ENCODE measurements at regions of chr14 and their contacts with region 1.

Region 1: DNA sequence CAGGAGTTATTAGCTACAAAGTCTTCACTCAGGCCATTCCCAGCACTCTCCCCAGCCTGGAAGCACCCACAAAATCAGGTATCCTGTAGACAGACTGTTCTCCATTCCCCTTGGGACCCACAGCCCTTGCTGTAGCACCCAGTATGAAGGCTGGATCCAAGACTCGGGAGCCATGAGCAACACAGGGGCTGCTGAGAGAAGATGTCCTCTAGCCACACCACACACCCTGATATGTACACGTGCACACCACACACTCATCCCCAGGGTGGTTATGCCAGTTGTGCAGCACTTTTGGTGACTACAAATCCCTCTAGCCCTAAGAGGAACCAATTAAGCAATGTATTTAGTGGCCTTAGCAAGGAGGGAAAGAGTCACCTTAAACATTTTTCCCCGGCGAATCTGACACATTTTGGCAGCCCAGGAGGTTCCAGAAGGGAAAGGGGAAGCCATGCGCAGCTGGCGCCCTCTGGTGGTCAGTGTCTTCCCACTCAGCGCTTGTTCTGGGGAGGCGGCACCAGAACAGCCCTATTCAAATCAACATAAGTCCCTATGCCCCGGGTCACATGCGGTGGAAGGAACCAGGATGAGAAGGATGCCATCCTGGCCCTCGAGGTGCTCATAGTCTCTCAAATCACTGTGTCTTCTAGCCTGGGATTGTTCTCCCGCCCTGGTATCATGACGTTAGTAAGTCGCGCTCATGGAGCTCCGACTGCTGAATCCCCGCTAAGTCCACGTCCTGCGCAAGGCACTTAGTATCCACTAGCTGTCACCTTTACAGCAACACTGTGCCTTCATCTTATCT is 96.9 kb downstream of the GCH1 start:
- DNase-seq: peak; percentile 85
- H3K4me3 Mint-ChIP-seq: peak overlapping the region; percentile 45
- H3K27ac Mint-ChIP-seq: no peak overlapping the region
- H3K4me1 Mint-ChIP-seq: peaks cover 6% of the 10 kb centered on the region
- H3K27me3 Mint-ChIP-seq: peaks cover 44% of the 10 kb centered on the region
- CTCF ChIP-seq: peak; percentile 75

Region 2: DNA sequence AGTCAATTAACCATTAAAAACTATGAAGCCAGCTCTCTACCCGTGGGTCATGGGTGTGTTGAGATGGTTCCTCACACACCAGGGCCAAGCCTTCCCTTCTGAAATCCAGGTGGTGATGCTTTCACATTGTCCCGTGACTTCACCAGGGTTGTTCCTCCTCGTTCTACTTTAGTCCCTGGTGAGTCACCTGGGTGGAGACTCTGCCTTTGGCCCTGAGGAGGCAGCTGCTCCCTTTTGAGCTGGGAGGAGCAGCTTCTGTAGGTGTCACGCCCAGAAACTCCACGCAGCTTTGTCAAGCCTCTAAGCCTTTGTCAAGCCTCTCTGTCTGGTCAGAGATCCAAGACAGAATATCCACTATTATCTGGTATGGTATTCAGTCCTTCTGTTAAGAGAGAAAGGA is 1197.3 kb before region 1 on chr14:
- CTCF ChIA-PET with region 1: no interaction called
- intact Hi-C with region 1: no loop called
- DNase-seq: peak; percentile 60
- H3K4me3 Mint-ChIP-seq: no peak overlapping the region
- H3K27ac Mint-ChIP-seq: peak overlapping the region; percentile 53
- H3K4me1 Mint-ChIP-seq: peaks cover 23% of the 10 kb centered on the region
- H3K27me3 Mint-ChIP-seq: no peaks in the 10 kb centered on the region
- CTCF ChIP-seq: no peak

Region 3: GRCh38 chr14:54788701-54789100 is 17.0 kb before region 1 on chr14:
- CTCF ChIA-PET with region 1: no interaction called
- intact Hi-C with region 1: no loop called
- DNase-seq: no peak
- H3K4me3 Mint-ChIP-seq: no peak overlapping the region
- H3K27ac Mint-ChIP-seq: no peak overlapping the region
- H3K4me1 Mint-ChIP-seq: no peaks in the 10 kb centered on the region
- H3K27me3 Mint-ChIP-seq: no peaks in the 10 kb centered on the region
- CTCF ChIP-seq: no peak

Region 4: DNA sequence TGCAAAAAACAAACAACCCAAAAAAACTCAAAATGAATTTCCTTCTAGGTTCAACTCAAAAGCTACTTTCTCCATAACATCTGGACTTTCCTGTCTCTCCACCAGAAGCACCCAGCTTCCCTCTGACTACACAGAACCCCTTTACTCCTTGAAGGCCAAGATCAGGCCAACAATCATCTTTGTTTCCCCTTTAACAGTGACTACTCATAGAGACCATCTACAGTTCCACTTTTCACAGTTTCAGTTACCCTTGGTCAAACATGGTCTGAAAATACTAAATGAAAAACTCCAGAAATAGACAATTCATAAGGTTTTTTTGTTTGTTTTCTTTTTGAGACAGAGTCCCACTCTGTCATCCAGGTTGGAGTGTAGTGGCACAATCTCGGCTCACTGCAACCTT is 85.1 kb after region 1 on chr14:
- CTCF ChIA-PET with region 1: no interaction called
- intact Hi-C with region 1: no loop called
- DNase-seq: no peak
- H3K4me3 Mint-ChIP-seq: no peak overlapping the region
- H3K27ac Mint-ChIP-seq: no peak overlapping the region
- H3K4me1 Mint-ChIP-seq: no peaks in the 10 kb centered on the region
- H3K27me3 Mint-ChIP-seq: no peaks in the 10 kb centered on the region
- CTCF ChIP-seq: no peak

Region 5: DNA sequence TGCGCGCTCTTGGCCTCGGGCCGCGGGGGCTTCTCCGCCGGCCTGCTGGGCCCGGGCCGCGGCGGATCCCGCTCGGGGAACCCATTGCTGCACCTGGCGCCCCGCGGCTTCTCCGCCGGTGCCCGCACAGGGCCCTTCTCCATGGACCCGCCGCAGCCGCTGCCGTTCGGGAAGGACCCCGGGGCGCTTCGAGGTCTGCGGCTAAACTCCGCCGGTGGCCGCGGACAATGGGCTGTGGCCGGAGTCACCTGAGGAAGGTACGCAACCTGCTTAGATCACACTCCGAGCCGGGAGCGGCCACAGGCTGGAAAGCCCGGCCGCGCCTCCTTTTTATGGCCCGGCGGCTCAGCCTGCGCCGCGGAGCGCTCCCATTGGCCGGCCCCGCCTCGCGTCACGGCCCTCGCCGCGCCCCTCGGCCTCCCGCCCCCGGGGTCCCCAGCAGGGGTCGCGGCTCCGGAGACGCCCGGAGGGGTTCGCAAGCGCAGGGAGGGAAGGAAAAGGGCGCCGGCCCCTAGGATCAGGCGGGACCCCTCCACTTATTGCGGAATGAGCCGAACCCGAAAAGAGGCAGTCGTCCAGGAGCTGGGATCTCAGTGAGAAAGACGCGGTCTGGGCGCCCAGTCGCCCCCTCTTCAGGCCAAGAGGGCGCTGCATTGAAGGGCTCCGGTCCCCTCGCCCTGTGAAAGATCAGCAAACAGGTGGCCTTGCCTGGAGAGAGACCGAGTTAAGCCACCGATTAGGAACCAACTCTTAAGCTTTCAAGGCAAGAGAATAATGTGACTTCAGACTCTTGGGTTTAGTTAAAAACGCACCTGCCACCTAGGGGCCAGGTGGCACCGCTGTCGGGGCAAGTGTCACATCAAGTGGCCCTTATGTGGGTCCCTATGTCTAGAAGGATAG is 97.0 kb after region 1 on chr14 and contains the start of gene GCH1:
- CTCF ChIA-PET with region 1: no interaction called
- intact Hi-C with region 1: loop called (anchors 5 kb)
- DNase-seq: peak; percentile 84
- H3K4me3 Mint-ChIP-seq: peak within 1 kb of the TSS; percentile 75
- H3K27ac Mint-ChIP-seq: peak within 1 kb of the TSS; percentile 33
- H3K4me1 Mint-ChIP-seq: no peaks in the 10 kb centered on the region
- H3K27me3 Mint-ChIP-seq: no peaks in the 10 kb centered on the region
- CTCF ChIP-seq: peak; percentile 66
- total RNA-seq, gene GCH1: 6.8 and 8.0 TPM in 2 replicates

Measured in Calu3 (cell line).